ENCODE measurements at regions of chr1 and their contacts with region 1.

Region 1: GRCh38 chr1:225700164-225700740 is 47.3 kb upstream of the ENAH start:
- DNase-seq: peak; percentile 75 to 99
- H3K4me3 ChIP-seq: peak overlapping the region; percentile 30; the same call in 1 of the 2 replicates
- H3K27ac ChIP-seq: peak overlapping the region; percentile 71
- H3K4me1 ChIP-seq: peaks cover 23% of the 10 kb centered on the region
- H3K27me3 ChIP-seq: no peaks in the 10 kb centered on the region
- CTCF ChIP-seq: no peak

Region 2: DNA sequence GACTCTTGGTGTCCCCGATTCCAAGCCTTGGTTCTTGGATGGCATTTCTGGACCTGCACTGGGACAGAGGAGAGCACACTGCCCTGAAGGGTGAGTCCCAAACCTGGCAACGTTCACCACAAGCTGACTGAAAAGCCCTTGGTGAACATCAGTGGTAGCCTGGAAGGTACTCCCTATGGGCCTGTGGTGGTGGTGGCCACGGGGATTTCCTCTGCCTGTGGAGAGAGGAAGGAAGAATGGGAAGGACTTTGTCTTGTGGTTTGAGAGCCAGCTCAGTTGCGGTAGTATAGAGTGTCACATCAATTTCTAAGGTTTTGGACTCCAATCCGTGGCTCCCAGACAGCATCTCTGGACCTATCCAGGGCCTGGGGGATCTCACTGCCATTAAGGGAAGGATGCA is 720.1 kb before region 1 on chr1:
- CTCF ChIA-PET with region 1: no interaction called
- POLR2A ChIA-PET with region 1: no interaction called
- intact Hi-C with region 1: no loop called
- DNase-seq: no peak
- H3K4me3 ChIP-seq: no peak overlapping the region
- H3K27ac ChIP-seq: no peak overlapping the region
- H3K4me1 ChIP-seq: no peaks in the 10 kb centered on the region
- H3K27me3 ChIP-seq: no peaks in the 10 kb centered on the region
- CTCF ChIP-seq: no peak

Region 3: DNA sequence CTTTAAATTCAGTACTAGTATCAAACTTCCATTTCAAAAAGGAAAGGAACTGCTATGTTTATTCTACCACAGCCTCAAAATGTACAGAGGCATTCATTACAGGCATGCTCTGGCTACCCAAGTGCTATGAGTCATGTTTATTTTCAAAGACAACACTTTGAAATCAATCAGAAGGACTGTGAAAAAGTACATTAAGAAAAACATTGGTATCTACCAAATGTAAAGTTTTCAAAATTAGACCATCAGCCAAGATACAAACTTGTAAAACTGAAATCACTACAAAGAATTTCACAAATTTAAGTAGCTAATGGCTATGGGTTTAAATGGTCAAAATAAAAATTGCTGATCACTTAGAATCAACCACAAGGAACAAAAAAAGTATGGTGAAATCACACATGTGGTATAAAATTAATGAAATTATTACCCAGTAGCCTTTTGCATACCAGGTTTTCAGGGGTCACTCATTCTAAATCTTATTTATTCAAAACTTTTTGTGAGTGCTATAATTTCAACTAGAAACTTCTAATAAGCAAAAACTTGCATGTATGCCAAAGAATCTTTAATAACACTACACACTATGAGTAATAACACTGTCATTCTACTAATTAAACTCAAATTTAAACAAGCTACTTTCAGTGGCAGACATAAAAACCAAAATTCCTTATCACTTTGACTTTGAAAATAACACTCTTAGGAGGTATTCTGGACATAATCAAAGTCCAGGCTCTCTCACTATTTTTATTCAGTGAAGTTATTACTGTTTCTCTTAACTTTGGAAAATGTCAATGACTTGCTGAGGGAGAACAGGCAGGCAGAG is 96.5 kb before region 1 on chr1:
- CTCF ChIA-PET with region 1: no interaction called
- POLR2A ChIA-PET with region 1: no interaction called
- intact Hi-C with region 1: loop called (anchors 5 kb)
- DNase-seq: peak; percentile 8 to 72
- H3K4me3 ChIP-seq: no peak overlapping the region
- H3K27ac ChIP-seq: peak overlapping the region; percentile 69
- H3K4me1 ChIP-seq: peaks cover 42% of the 10 kb centered on the region
- H3K27me3 ChIP-seq: no peaks in the 10 kb centered on the region
- CTCF ChIP-seq: no peak

Region 4: DNA sequence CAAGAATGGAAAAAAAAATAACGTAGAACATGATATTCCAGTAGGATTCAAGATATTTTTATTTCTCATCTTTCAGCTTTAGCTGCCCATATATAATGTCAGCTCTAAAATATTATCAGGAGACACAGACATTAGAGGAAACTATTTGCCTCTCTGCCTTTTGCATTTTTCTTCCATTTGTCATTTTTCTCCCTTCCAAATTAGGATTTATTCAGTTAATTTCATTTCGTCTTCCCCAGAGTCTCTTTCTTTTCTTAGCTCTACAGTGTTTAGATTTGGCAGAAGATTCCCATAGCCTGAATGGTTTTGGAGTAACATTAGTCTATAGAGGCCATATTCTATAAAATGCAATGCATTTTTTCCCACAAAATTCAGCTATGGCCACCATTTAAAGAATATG is 42.2 kb before region 1 on chr1:
- CTCF ChIA-PET with region 1: interaction called, 3 read pairs
- POLR2A ChIA-PET with region 1: interaction called, 20 read pairs
- intact Hi-C with region 1: loop called (anchors 1 kb)
- DNase-seq: no peak
- H3K4me3 ChIP-seq: no peak overlapping the region
- H3K27ac ChIP-seq: peak overlapping the region; percentile 89
- H3K4me1 ChIP-seq: peaks cover 55% of the 10 kb centered on the region
- H3K27me3 ChIP-seq: no peaks in the 10 kb centered on the region
- CTCF ChIP-seq: no peak

Region 5: GRCh38 chr1:225735252-225736149 is 35.2 kb after region 1 on chr1:
- CTCF ChIA-PET with region 1: interaction called, 3 read pairs
- POLR2A ChIA-PET with region 1: interaction called, 4 read pairs
- intact Hi-C with region 1: loop called (anchors 1 kb)
- DNase-seq: peak; percentile 79 to 90
- H3K4me3 ChIP-seq: peak overlapping the region; percentile 18; the same call in 1 of the 2 replicates
- H3K27ac ChIP-seq: peak overlapping the region; percentile 86
- H3K4me1 ChIP-seq: peaks cover 63% of the 10 kb centered on the region
- H3K27me3 ChIP-seq: no peaks in the 10 kb centered on the region
- CTCF ChIP-seq: no peak

Region 6: DNA sequence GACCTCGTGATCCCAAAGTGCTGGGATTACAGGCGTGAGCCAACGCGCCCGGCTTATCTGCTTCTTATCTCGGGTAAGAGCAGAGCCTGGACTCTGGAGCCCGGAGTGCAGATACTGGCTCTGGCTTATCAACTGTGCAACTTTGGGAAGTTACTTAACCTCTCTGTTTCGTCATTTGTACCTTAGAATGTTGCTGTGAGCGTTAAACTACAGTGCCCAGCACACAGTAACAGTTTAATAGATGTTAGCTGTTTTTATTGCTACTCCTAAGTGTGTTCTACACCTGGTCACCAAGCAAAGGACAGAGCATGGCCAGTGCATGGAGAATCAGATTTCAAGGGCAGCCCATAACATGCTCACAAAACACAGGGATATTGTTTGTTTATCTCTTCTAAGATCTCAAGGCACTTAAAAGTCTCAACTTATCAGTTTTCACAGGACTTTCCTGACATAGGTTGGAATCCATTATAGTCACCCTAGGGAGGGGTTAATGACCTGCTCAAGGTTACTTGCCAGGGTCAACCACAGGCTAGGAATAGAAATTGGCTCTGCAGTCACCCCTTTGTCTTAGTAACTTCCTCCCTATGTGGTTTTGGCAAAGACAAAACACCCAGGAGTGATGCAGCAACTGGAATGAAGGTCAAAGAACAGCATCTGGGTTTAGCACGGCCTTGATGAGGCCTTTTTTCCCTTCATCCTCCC is 54.8 kb after region 1 on chr1:
- CTCF ChIA-PET with region 1: no interaction called
- POLR2A ChIA-PET with region 1: interaction called, 19 read pairs
- intact Hi-C with region 1: no loop called
- DNase-seq: peak; percentile 63 to 83
- H3K4me3 ChIP-seq: no peak overlapping the region
- H3K27ac ChIP-seq: peak overlapping the region; percentile 48
- H3K4me1 ChIP-seq: peaks cover 30% of the 10 kb centered on the region
- H3K27me3 ChIP-seq: no peaks in the 10 kb centered on the region
- CTCF ChIP-seq: no peak

Region 7: DNA sequence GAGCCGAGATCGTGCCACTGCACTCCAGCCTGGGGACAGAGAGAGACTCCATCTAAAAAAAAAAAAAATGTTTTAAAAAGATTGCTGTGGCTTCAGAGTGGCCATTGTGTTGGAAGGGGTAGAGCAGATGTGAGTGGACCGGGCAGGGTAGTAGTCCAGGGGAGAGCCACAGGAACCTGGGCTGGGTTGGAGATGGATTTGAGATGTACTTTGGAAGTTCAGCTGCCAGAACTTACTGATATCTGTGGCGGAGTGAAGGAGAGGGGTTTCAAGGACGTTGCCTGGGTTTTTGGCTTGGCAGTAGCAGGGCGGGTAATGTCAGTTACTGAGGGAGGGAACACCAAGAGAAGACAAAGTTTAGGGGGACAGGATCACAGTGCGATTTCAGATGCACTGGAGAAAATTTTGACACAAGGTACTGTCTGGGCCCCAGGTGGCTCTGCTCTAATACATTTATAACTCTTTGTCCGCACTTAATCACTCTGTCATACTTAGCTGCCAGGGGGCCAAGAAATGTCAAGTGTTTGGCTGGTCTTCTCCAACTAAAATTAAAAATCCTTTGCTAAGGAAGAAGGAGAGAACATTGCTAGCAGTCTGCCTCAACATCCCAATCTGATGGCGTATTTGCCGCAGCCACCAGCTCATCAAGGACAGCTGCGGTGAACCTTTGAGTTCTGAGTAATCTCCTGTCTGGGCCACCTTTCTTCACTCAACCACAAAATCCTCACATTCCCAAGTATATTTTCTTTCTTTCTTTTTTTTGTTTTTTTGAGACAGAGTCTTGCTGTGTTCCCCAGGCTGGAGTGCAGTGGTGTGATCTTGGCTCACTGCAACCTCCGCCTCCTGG is 119.3 kb after region 1 on chr1:
- CTCF ChIA-PET with region 1: no interaction called
- POLR2A ChIA-PET with region 1: no interaction called
- intact Hi-C with region 1: no loop called
- DNase-seq: peak in 1 of 2 experiments; percentile 3
- H3K4me3 ChIP-seq: no peak overlapping the region
- H3K27ac ChIP-seq: peak overlapping the region; percentile 16; the same call in 1 of the 2 replicates
- H3K4me1 ChIP-seq: peaks cover 46% of the 10 kb centered on the region
- H3K27me3 ChIP-seq: no peaks in the 10 kb centered on the region
- CTCF ChIP-seq: no peak